Motor neuron (in vitro differentiated cells): ENCODE measurements at regions of chr6 and their contacts with region 1.

Region 1: GRCh38 chr6:142692942-142693341 is 252.0 kb downstream of the HIVEP2 start:
- ATAC-seq: peak; percentile 72 to 97 (median 93)
- H3K4me3 ChIP-seq: no peak overlapping the region
- H3K27ac ChIP-seq: no peak overlapping the region
- H3K4me1 ChIP-seq: peaks cover 4 to 9% of the 10 kb centered on the region in 2 donors

Region 2: GRCh38 chr6:142374965-142375733 is 317.8 kb before region 1 on chr6:
- in situ Hi-C with region 1: no loop called
- ATAC-seq: peak in 2 of 8 experiments; percentile 20 to 26
- H3K4me3 ChIP-seq: no peak overlapping the region
- H3K27ac ChIP-seq: no peak overlapping the region
- H3K4me1 ChIP-seq: peaks cover 0 to 14% of the 10 kb centered on the region in 2 donors

Region 3: GRCh38 chr6:142885182-142885867 is 192.4 kb after region 1 on chr6:
- in situ Hi-C with region 1: loop called in 1 of 9 experiments (anchors 25 kb)
- ATAC-seq: peak; percentile 90 to 97 (median 95)
- H3K4me3 ChIP-seq: peak overlapping the region; percentile 30 to 43 (median 33)
- H3K27ac ChIP-seq: peak overlapping the region; percentile 48 to 59
- H3K4me1 ChIP-seq: peaks cover 29 to 34% of the 10 kb centered on the region in 2 donors

Region 4: DNA sequence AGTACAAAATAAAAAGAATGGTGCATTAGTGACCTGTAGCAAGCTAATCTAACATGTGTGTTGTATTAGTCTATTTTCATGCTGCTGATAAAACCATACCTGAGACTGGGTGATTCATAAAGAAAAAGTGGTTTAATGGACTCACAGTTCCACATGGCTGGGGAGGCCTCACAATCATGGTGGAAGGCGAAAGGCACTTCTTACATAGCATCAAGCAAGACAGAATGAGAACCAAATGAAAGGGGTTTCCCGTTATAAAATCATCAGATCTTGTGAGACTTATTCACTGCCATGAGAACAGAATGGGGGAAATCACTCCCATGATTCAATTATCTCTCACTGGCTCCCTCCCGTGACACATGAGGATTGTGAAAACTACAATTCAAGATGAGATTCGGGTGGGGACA is 322.4 kb after region 1 on chr6:
- in situ Hi-C with region 1: no loop called
- ATAC-seq: no peak
- H3K4me3 ChIP-seq: no peak overlapping the region
- H3K27ac ChIP-seq: no peak overlapping the region
- H3K4me1 ChIP-seq: no peaks in the 10 kb centered on the region

Region 5: GRCh38 chr6:143026696-143027449 is 333.9 kb after region 1 on chr6:
- in situ Hi-C with region 1: loop called in 2 of 9 experiments (anchors 25 kb)
- ATAC-seq: peak in 3 of 8 experiments; percentile 30 to 57 (median 30)
- H3K4me3 ChIP-seq: no peak overlapping the region
- H3K27ac ChIP-seq: no peak overlapping the region
- H3K4me1 ChIP-seq: no peaks in the 10 kb centered on the region

Region 6: DNA sequence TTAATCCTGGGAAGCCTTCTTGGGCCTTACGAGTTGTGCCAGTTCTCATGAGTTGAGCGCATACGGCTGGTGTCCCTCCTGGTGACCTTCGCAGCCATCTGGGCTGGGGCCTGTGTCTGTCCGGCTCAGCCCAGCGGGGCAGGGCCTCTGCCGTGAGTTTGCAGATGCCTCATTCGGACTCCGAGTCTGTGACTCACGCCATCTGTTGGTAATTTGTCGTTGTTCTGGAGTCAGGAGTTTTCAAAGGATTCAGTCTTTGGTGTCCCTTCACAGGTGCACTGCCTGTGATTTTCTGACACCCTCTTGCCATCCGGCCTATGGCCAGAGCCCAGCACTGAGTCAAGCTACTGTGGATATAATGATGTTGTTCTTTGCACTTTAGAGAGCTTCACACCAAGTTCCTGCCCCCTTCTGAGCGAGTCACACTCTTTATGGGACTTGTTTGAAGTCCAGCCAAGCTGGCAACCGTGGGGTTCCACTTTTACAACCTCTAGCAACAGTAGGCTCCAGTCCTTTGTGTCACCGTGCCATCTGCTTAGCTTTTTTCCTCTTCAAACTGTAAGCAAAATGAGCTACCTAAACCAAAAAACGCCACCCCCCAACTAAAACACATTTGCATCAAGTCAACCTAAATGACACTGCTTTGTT is 543.3 kb after region 1 on chr6:
- in situ Hi-C with region 1: no loop called
- ATAC-seq: peak in 3 of 8 experiments; percentile 31 to 95 (median 95)
- H3K4me3 ChIP-seq: no peak overlapping the region
- H3K27ac ChIP-seq: no peak overlapping the region
- H3K4me1 ChIP-seq: no peaks in the 10 kb centered on the region

Region 7: GRCh38 chr6:143400258-143401067 is 707.5 kb after region 1 on chr6:
- in situ Hi-C with region 1: loop called in 4 of 9 experiments (anchors 25 kb)
- ATAC-seq: no peak
- H3K4me3 ChIP-seq: no peak overlapping the region
- H3K27ac ChIP-seq: no peak overlapping the region
- H3K4me1 ChIP-seq: peaks cover 6 to 19% of the 10 kb centered on the region in 2 donors